ENCODE measurements at regions of chr18 and their contacts with region 1.

Region 1: GRCh38 chr18:12744103-12744502 is 41.3 kb downstream of the PSMG2 start:
- DNase-seq: no peak
- ATAC-seq: peak; percentile 77
- H3K4me3 ChIP-seq: no peak overlapping the region
- H3K27ac ChIP-seq: no peak overlapping the region
- H3K4me1 ChIP-seq: no peaks in the 10 kb centered on the region
- H3K27me3 ChIP-seq: no peaks in the 10 kb centered on the region
- CTCF ChIP-seq: peak; percentile 25 to 62 (median 53); a peak in 5 of 6 replicates
- EP300 ChIP-seq: no peak
- POLR2A ChIP-seq: no peak
- RAD21 ChIP-seq: peak; percentile 87

Region 2: GRCh38 chr18:12726774-12727550 is 17.1 kb before region 1 on chr18:
- CTCF ChIA-PET with region 1: interaction called, 13 read pairs
- POLR2A ChIA-PET with region 1: no interaction called
- RAD21 ChIA-PET with region 1: interaction called, 3 read pairs
- SMC1A ChIA-PET with region 1: interaction called, 12 read pairs
- in situ Hi-C with region 1: no loop called
- intact Hi-C with region 1: no loop called
- DNase-seq: no peak
- ATAC-seq: peak; percentile 84
- H3K4me3 ChIP-seq: no peak overlapping the region
- H3K27ac ChIP-seq: no peak overlapping the region
- H3K4me1 ChIP-seq: no peaks in the 10 kb centered on the region
- H3K27me3 ChIP-seq: no peaks in the 10 kb centered on the region
- CTCF ChIP-seq: peak; percentile 82 to 84 (median 83)
- EP300 ChIP-seq: no peak
- POLR2A ChIP-seq: no peak; the same call in 1 of the 2 replicates
- RAD21 ChIP-seq: peak; percentile 84